ENCODE measurements at regions of chr3 and their contacts with region 1.

Region 1: DNA sequence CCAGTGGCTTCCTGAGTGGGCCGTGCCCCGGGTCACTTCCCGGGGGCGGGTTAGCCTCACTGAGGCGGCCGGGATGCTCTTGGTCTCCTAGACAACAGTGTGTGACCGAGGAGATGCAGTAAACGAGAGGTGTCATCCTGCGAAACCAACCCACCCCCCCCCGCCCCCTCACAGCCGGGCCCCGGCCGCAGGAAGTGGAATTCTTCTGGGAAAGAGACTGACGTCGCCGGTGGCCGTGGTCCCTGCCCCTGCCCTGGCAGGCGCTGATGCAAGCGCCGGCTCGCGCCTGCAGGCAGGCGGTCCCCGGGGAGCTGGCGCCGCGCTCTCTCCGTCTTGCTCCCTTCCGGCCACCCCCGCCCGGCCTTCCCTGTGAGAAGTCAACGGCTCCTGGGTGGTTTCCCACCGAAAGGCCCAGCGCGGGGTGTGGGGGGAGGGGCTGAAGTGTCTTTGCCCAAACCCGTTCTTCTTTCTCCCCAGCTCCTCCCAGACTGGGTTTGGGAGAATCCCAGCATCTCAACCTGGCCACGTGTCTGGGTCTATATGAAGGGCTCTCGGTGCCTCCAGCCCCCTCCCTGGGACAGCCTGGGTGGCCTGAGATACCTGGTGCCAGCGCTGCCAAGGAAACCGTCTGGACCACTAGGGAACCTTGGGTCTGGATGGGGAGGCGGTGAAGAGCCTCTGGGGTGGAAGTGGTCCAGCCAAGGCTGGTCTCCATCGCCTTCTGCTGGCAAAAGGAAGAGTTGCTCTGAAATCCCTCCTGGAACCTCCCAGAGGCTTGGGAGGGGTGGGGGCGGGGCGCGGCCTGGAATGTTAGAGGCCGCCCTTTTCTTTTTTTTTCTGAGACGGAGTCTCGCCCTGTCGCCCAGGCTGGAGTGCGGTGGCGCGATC is 47.3 kb downstream of the BHLHE40 start:
- DNase-seq: peak; percentile 84 to 97
- H3K4me3 ChIP-seq: peak overlapping the region; percentile 60 to 62
- H3K27ac ChIP-seq: peak overlapping the region; percentile 88 to 94
- H3K4me1 ChIP-seq: peaks cover 0 to 21% of the 10 kb centered on the region in 2 donors
- H3K27me3 ChIP-seq: no peaks in the 10 kb centered on the region
- CTCF ChIP-seq: peak; percentile 76 to 81 (median 80)

Region 2: GRCh38 chr3:4565806-4566501 is 460.6 kb before region 1 on chr3:
- intact Hi-C with region 1: no loop called
- DNase-seq: no peak
- H3K4me3 ChIP-seq: no peak overlapping the region
- H3K27ac ChIP-seq: no peak overlapping the region
- H3K4me1 ChIP-seq: no peaks in the 10 kb centered on the region
- H3K27me3 ChIP-seq: no peaks in the 10 kb centered on the region
- CTCF ChIP-seq: no peak

Region 3: GRCh38 chr3:4584456-4585249 is 441.9 kb before region 1 on chr3:
- intact Hi-C with region 1: loop called (anchors 10 kb)
- DNase-seq: no peak
- H3K4me3 ChIP-seq: peak overlapping the region; percentile 43 to 57
- H3K27ac ChIP-seq: peak overlapping the region; percentile 84 to 86
- H3K4me1 ChIP-seq: peaks cover 0 to 41% of the 10 kb centered on the region in 2 donors
- H3K27me3 ChIP-seq: no peaks in the 10 kb centered on the region
- CTCF ChIP-seq: peak in 2 of 3 experiments; percentile 39 to 55

Region 4: DNA sequence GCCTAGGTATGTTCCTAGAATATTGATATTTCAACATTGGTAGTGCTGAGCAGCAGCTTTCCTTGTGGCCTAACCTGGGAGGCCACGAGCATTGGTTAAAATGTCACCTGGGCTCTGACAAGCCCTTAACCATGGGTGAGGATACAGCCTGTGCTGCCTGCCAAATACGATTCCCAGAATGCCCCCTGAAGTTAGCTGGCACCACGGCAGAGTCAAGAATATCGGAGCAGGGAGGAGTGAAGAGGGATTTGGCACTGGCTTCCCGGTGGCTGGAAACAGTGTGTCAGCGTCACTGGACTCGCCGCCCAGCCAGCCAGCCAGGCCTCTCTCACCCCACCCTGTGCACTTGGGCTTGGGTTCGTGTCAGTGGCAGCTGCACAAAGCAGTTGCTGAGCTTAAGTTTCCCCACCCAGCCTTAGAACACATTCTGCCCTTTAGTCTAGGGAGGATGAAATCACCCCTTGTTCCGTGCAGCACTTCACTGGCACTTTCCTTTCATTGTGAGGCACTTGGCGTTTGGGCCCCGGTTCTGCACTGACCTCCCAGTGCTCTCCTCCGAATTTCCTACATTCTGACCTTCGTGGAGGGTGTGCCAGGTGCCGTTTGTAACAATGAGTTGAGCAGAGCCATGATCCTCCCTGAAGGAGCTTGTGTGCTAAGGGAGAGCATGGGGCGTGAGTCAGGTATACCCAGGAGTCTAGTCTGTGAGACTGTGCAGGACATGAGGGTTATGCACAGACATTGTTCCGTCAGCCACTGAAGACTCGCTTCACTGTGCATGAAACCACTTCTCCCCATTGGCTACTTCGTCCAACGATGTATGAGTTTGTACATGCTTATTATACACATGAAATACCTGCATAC is 200.1 kb before region 1 on chr3:
- intact Hi-C with region 1: loop called (anchors 2 kb)
- DNase-seq: peak; percentile 68 to 91
- H3K4me3 ChIP-seq: no peak overlapping the region
- H3K27ac ChIP-seq: peak overlapping the region; percentile 74 to 81
- H3K4me1 ChIP-seq: peaks cover 8 to 35% of the 10 kb centered on the region in 2 donors
- H3K27me3 ChIP-seq: no peaks in the 10 kb centered on the region
- CTCF ChIP-seq: no peak

Region 5: DNA sequence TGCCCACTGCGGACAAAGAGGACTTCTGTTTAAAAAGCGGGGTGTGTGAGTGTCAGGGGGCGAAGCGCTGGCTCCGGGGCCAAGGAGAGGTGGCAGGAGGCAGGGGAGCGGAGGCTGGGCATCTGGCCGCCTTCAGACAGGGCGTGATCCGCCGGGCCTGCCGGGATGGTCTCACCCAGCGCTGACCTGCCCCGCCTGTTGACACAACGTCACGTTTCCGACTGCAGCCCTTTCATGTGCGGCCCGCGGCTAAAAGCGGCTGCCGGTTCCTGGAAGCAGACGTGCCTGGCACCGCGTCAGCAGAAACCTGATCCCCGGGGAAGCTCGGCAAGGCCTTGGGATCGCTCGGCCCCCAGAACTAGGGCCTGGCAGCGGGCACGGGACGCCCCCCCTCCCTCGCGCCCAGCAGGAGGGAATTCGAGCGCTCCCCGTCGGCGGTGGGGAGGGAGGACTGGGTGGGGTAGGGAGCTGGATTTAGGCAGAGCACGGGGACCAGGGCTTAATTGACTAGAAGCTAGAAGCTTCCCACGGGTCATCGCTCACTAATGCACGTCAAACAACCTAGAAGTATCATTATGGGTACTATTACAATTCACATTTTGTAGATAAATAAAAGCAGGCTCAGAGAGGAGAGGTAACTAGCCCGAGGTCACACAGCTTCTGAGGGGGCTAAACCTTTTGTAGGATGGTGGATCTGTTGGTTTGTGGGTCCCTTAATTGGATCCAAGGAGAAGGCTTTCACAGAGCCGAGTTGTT is 39.6 kb before region 1 on chr3:
- intact Hi-C with region 1: loop called (anchors 2 kb)
- DNase-seq: peak; percentile 92 to 99
- H3K4me3 ChIP-seq: peak overlapping the region; percentile 46 to 58
- H3K27ac ChIP-seq: peak overlapping the region; percentile 97 to 99
- H3K4me1 ChIP-seq: peaks cover 29 to 52% of the 10 kb centered on the region in 2 donors
- H3K27me3 ChIP-seq: no peaks in the 10 kb centered on the region
- CTCF ChIP-seq: peak in 1 of 3 experiments; percentile 22

Region 6: GRCh38 chr3:5057857-5058324 is 31.3 kb after region 1 on chr3:
- intact Hi-C with region 1: loop called (anchors 2 kb)
- DNase-seq: peak; percentile 49 to 89
- H3K4me3 ChIP-seq: no peak overlapping the region
- H3K27ac ChIP-seq: no peak overlapping the region
- H3K4me1 ChIP-seq: peaks cover 0 to 7% of the 10 kb centered on the region in 2 donors
- H3K27me3 ChIP-seq: no peaks in the 10 kb centered on the region
- CTCF ChIP-seq: peak; percentile 70 to 79 (median 77)

Region 7: GRCh38 chr3:5165698-5166097 is 139.1 kb after region 1 on chr3:
- intact Hi-C with region 1: no loop called
- DNase-seq: no peak
- H3K4me3 ChIP-seq: no peak overlapping the region
- H3K27ac ChIP-seq: no peak overlapping the region
- H3K4me1 ChIP-seq: peaks cover 4 to 8% of the 10 kb centered on the region in 2 donors
- H3K27me3 ChIP-seq: no peaks in the 10 kb centered on the region
- CTCF ChIP-seq: no peak

Measured in ascending aorta (tissue), 2 donors.